Adrenal gland (tissue), 19 donors: ENCODE measurements at regions of chr2 and their contacts with region 1.

Region 1: GRCh38 chr2:223837287-223838061 is at the start of gene AP1S3:
- DNase-seq: peak; percentile 57 to 78 (median 67)
- H3K4me3 ChIP-seq: peak within 1 kb of the TSS; percentile 48 to 89 (median 78)
- H3K27ac ChIP-seq: peak within 1 kb of the TSS in 1 of 5 donors; percentile 44
- H3K4me1 ChIP-seq: peaks cover 3 to 10% of the 10 kb centered on the region in 2 donors
- H3K27me3 ChIP-seq: no peaks in the 10 kb centered on the region
- CTCF ChIP-seq: no peak
- POLR2A ChIP-seq: no peak
- total RNA-seq, gene AP1S3: 0.24 to 6.2 (median 1.5) TPM

Region 2: GRCh38 chr2:223959688-223960087 is 122.2 kb after region 1 on chr2:
- intact Hi-C with region 1: loop called in 1 of 2 experiments (anchors 5 kb)
- DNase-seq: peak in 2 of 7 donors; percentile 22
- H3K4me3 ChIP-seq: no peak overlapping the region
- H3K27ac ChIP-seq: no peak overlapping the region
- H3K4me1 ChIP-seq: peaks cover 5 to 51% of the 10 kb centered on the region in 2 donors
- H3K27me3 ChIP-seq: no peaks in the 10 kb centered on the region
- CTCF ChIP-seq: no peak
- POLR2A ChIP-seq: no peak